ENCODE measurements at regions of chr7 and their contacts with region 1.

Region 1: GRCh38 chr7:53022893-53023292 is 12.5 kb upstream of the POM121L12 start:
- DNase-seq: no peak
- H3K4me3 ChIP-seq: no peak overlapping the region
- CTCF ChIP-seq: no peak
- POLR2A ChIP-seq: no peak

Region 2: GRCh38 chr7:52749880-52750279 is 273.0 kb before region 1 on chr7:
- intact Hi-C with region 1: loop called (anchors 10 kb)
- DNase-seq: no peak
- H3K4me3 ChIP-seq: no peak overlapping the region
- CTCF ChIP-seq: no peak
- POLR2A ChIP-seq: no peak

Region 3: DNA sequence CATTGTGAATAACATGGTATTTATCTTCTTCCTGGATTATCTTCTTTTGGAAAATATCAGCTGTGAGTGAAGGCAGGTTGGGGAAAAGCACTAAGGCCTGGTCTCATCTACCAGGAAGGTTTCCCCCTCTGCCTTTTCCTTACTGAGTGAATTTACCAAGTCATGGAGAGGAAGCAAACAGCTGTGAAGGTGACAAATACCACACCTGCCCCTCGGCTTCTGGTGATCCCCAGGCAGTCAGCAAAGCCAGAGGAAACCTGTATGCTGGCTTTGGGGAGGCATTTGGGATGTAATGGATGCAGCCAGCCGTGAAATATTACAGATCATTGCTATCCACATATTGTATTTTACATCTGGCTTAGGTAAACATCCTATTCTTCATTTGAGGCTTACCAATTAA is 36.7 kb after region 1 on chr7:
- intact Hi-C with region 1: no loop called
- DNase-seq: no peak
- H3K4me3 ChIP-seq: no peak overlapping the region
- CTCF ChIP-seq: no peak
- POLR2A ChIP-seq: no peak

Region 4: GRCh38 chr7:53470336-53470970 is 447.6 kb after region 1 on chr7:
- intact Hi-C with region 1: no loop called
- DNase-seq: no peak
- H3K4me3 ChIP-seq: no peak overlapping the region
- CTCF ChIP-seq: no peak
- POLR2A ChIP-seq: no peak

Measured in lower leg skin (tissue), 4 donors.